Activated T-helper 1 cell treated with anti-CD3 and anti-CD28 coated beads, Interleukin-12 subunit alpha, Interleukin-12 subunit beta, Interleukin-2, Interleukin-4 antibody, amounts not matched to agents 30 ng/mL and 10 ng/mL and 1 ng/mL, durations not matched to agents 14 hours and 24 hours and 36 hours (primary cell): ENCODE measurements at regions of chr9 and their contacts with region 1.

Region 1: DNA sequence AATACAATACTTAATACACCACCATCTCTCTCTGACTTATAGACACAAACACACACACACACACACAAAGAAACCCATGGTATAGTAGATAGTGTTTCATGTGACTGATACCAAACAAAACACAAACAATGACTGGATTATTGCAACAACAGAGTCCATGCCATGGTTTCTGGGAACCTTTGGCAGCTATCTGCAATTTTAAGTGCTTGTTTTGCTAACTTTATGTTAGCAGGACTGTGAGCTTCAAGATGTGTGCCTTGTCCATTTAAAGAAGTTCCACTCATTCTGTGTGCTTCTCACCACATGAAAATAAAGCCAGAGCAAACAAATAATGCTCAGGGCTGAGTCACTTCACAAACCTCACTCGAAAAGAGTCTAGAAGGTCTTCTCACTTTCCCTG is 15.1 kb upstream of the LURAP1L start:
- DNase-seq: no peak
- H3K4me3 Mint-ChIP-seq: no peak overlapping the region
- H3K27ac Mint-ChIP-seq: no peak overlapping the region
- H3K4me1 Mint-ChIP-seq: no peaks in the 10 kb centered on the region
- H3K27me3 Mint-ChIP-seq: no peaks in the 10 kb centered on the region

Region 2: DNA sequence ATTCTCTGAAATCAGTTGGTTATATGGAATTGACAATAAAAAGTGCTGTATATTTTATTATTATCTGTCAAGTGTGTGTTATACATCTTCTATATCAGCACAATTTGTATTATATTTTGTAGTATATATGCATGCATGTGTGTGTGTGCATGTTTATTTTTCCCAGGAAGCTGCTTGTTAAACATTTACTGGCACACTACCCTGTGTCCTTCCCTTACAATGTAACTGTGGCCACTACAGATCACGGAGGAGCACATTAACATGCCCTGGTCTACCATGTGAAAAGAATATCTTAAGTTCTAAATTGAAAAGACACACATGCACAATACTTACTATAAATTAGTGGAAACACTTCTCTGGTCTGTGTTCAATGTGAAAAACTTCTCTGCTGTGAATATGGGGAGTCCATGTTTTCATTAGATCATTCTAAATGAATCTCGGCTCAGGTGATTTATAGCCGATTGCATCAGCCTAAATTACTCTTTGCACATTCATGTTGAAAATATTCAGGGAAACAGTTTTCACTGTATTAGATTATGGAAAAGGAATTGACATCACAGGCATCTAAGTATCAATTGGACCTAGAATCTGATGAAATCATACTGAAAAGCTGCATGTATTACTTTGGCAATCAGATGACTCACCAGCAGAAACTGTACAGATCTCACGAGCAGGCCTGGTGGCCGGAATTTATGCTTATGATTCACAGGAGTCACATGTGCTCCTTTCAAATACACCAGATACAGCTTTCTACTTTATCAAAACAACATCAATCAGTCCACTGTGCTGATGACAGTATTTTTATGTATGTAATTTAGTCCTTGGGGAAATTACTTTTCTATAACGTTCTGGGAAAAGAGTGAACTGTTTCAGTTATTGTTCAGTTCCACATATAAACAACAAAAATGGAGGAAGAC is 54.5 kb after region 1 on chr9:
- intact Hi-C with region 1: loop called (anchors 10 kb)
- DNase-seq: no peak
- H3K4me3 Mint-ChIP-seq: no peak overlapping the region
- H3K27ac Mint-ChIP-seq: no peak overlapping the region
- H3K4me1 Mint-ChIP-seq: no peaks in the 10 kb centered on the region
- H3K27me3 Mint-ChIP-seq: no peaks in the 10 kb centered on the region